ENCODE measurements at regions of chr1 and their contacts with region 1.

Region 1: DNA sequence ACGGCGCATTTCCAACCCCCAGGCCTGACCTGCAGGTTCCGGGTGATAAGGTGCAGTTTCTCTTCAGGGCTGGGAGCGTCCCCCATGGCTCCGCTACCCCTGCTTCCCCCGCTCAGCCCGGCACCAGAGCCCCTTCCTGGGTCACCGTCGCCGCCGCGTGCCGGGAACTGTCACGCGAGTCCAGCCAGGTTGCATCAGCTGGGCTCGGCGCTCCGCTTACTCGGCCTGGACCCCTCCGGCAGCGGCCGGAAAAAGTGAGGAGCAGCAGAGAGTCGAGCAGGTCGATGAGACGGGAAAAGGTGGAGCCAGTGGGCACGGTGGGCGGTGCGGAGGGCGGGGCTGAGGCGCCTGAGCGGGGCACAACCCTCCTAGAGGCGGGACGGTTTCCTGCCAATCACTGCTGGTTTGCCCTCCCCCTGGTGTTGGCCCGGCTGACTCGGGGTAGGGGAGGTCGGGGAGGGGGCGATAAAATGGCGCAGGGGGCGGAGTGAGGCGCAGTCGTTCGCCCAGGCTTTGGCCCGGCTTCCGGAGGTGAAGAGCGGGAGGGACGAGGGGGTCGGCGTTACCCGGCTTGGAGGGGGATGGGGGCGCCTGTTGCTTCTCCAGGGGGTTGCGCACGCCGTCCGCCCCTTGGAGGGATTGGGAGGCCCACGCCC is at the starts of genes S100PBP and YARS1:
- DNase-seq: peak; percentile 94 to 100
- H3K4me3 ChIP-seq: peak within 1 kb of the TSS; percentile 70 to 84
- H3K27ac ChIP-seq: peak within 1 kb of the TSS; percentile 91 to 92
- H3K4me1 ChIP-seq: peaks cover 13 to 36% of the 10 kb centered on the region in 2 donors
- H3K27me3 ChIP-seq: no peaks in the 10 kb centered on the region
- CTCF ChIP-seq: no peak
- total RNA-seq, gene S100PBP: 1.6 TPM
- total RNA-seq, gene YARS1: 48.9 TPM

Region 2: GRCh38 chr1:32650752-32651460 is 166.4 kb before region 1 on chr1 and contains the start of gene RBBP4:
- intact Hi-C with region 1: loop called (anchors 1 kb)
- DNase-seq: peak; percentile 90 to 98
- H3K4me3 ChIP-seq: peak within 1 kb of the TSS; percentile 79 to 100
- H3K27ac ChIP-seq: peak within 1 kb of the TSS; percentile 97 to 99
- H3K4me1 ChIP-seq: peaks cover 14 to 35% of the 10 kb centered on the region in 2 donors
- H3K27me3 ChIP-seq: no peaks in the 10 kb centered on the region
- CTCF ChIP-seq: no peak
- total RNA-seq, gene RBBP4: 45.4 TPM

Region 3: DNA sequence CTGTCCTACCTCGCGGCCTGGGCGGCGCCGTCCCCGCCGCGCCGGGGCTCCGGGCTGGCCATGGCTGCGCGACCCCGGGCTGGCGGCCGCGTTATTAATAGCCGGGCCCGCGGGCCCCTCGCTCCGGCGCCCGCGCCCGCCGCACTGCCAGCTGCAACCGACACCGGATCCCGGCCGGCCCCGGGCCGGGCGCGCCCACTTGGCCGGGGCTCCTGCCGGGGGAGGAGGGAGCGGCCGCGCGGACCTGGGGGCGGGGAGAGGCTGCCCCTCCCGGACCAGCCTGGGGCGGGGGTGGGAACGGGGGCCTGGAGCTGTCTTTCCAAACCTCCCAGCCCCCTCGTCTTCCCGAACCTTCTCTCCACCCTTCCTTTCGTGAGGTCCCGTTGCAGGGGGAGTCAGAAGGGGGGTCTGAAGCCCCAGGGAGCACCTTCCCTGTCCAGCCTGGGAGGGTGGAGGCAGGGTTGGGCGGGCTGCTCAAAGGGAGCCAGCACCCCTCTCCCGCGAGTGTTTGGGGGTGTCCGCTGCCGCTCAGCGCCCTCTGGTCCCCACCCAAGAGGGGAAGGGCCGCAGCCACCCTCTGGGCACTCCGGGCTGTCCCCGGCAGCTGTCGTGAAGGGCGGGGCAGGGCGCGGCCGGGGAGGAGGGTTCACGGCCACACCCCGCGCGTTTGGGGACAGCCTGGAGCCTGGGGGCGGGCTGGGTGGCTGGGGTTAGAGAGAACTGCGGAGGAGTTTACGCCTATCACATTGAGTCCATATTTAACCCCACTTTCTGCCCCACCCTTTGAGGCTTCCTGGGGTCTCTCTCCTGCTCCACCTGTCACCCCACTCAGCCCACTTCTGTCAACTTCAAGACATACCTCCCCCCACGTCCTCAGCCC is 114.4 kb before region 1 on chr1 and contains the start of gene SYNC:
- intact Hi-C with region 1: loop called (anchors 5 kb)
- DNase-seq: peak in 1 of 2 donors; percentile 85
- H3K4me3 ChIP-seq: peak within 1 kb of the TSS; percentile 86 to 93
- H3K27ac ChIP-seq: peak within 1 kb of the TSS; percentile 99
- H3K4me1 ChIP-seq: peaks cover 14 to 22% of the 10 kb centered on the region in 2 donors
- H3K27me3 ChIP-seq: no peaks in the 10 kb centered on the region
- CTCF ChIP-seq: no peak
- total RNA-seq, gene SYNC: 87.3 TPM

Region 4: GRCh38 chr1:32870615-32871363 is 53.5 kb after region 1 on chr1 and contains the start of gene FNDC5:
- intact Hi-C with region 1: loop called (anchors 2 kb)
- DNase-seq: no peak
- H3K4me3 ChIP-seq: peak within 1 kb of the TSS; percentile 56 to 77
- H3K27ac ChIP-seq: peak within 1 kb of the TSS in 1 of 2 donors; percentile 11
- H3K4me1 ChIP-seq: peaks cover 4 to 24% of the 10 kb centered on the region in 2 donors
- H3K27me3 ChIP-seq: no peaks in the 10 kb centered on the region
- CTCF ChIP-seq: no peak
- total RNA-seq, gene FNDC5: 8.9 TPM

Region 5: GRCh38 chr1:33181921-33182341 is 364.6 kb after region 1 on chr1 and contains the start of gene TRIM62:
- intact Hi-C with region 1: loop called (anchors 5 kb)
- DNase-seq: peak; percentile 27 to 92
- H3K4me3 ChIP-seq: peak within 1 kb of the TSS; percentile 79 to 87
- H3K27ac ChIP-seq: peak within 1 kb of the TSS; percentile 82 to 92
- H3K4me1 ChIP-seq: peaks cover 0 to 12% of the 10 kb centered on the region in 2 donors
- H3K27me3 ChIP-seq: no peaks in the 10 kb centered on the region
- CTCF ChIP-seq: no peak
- total RNA-seq, gene TRIM62: 18.1 TPM